ENCODE measurements at regions of chr4 and their contacts with region 1.

Region 1: GRCh38 chr4:26860157-26860921 is at the start of gene STIM2:
- DNase-seq: peak; percentile 91
- ATAC-seq: peak; percentile 71
- H3K4me3 ChIP-seq: peak within 1 kb of the TSS; percentile 84
- H3K27ac ChIP-seq: peak within 1 kb of the TSS; percentile 72
- H3K4me1 ChIP-seq: peaks cover 19% of the 10 kb centered on the region
- H3K27me3 ChIP-seq: no peaks in the 10 kb centered on the region
- CTCF ChIP-seq: peak; percentile 40 to 41 (median 41); a peak in 4 of 6 replicates
- EP300 ChIP-seq: no peak
- POLR2A ChIP-seq: peak; percentile 90
- RAD21 ChIP-seq: peak; percentile 58
- polyA plus RNA-seq, gene STIM2: 4.7 to 10.3 TPM

Region 2: GRCh38 chr4:26583865-26584652 is 276.3 kb before region 1 on chr4 and contains the start of gene TBC1D19:
- CTCF ChIA-PET with region 1: no interaction called
- POLR2A ChIA-PET with region 1: interaction called, 5 read pairs
- RAD21 ChIA-PET with region 1: no interaction called
- SMC1A ChIA-PET with region 1: no interaction called
- in situ Hi-C with region 1: no loop called
- intact Hi-C with region 1: loop called (anchors 2 kb)
- DNase-seq: peak; percentile 56
- ATAC-seq: peak; percentile 100
- H3K4me3 ChIP-seq: peak within 1 kb of the TSS; percentile 74
- H3K27ac ChIP-seq: peak within 1 kb of the TSS; percentile 44
- H3K4me1 ChIP-seq: peaks cover 4% of the 10 kb centered on the region; the same call in 1 of the 2 replicates
- H3K27me3 ChIP-seq: no peaks in the 10 kb centered on the region; a peak in 1 of 4 replicates
- CTCF ChIP-seq: 0 out of 6 replicates have a peak, but pooled peaks of 1 of the 3 experiments have one; percentile 2
- EP300 ChIP-seq: no peak
- POLR2A ChIP-seq: peak; percentile 70
- RAD21 ChIP-seq: peak; percentile 29
- polyA plus RNA-seq, gene TBC1D19: 0.29 to 0.53 TPM

Region 3: DNA sequence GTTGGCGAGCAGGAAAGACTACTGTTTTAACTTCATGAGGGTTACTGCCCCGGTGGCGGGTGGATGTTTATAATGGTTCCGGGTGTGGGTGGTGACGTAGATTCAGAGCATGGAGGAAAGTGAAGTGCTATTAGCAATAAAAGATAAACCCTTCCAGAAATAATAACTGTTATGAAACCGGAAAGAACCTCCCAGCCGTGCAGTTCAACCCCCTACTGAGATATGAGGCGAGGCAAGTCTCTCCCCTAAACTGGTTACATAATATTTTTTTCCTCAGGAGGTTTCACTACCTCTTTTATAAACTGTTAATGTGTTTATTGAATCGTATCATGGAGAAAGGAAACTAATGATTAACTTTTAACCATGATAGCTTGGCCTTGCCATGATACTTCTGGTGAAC is 33.6 kb before region 1 on chr4:
- CTCF ChIA-PET with region 1: interaction called, 3 read pairs
- POLR2A ChIA-PET with region 1: interaction called, 9 read pairs
- RAD21 ChIA-PET with region 1: interaction called, 7 read pairs
- SMC1A ChIA-PET with region 1: interaction called, 14 read pairs
- in situ Hi-C with region 1: no loop called
- intact Hi-C with region 1: loop called (anchors 1 kb)
- DNase-seq: peak; percentile 72
- ATAC-seq: peak; percentile 94
- H3K4me3 ChIP-seq: 0 out of 2 replicates have a peak overlapping the region, but pooled peaks have one; percentile 31
- H3K27ac ChIP-seq: peak overlapping the region; percentile 20; the same call in 1 of the 2 replicates
- H3K4me1 ChIP-seq: peaks cover 21% of the 10 kb centered on the region
- H3K27me3 ChIP-seq: no peaks in the 10 kb centered on the region
- CTCF ChIP-seq: no peak
- EP300 ChIP-seq: peak; percentile 91 to 93
- POLR2A ChIP-seq: no peak
- RAD21 ChIP-seq: no peak

Region 4: DNA sequence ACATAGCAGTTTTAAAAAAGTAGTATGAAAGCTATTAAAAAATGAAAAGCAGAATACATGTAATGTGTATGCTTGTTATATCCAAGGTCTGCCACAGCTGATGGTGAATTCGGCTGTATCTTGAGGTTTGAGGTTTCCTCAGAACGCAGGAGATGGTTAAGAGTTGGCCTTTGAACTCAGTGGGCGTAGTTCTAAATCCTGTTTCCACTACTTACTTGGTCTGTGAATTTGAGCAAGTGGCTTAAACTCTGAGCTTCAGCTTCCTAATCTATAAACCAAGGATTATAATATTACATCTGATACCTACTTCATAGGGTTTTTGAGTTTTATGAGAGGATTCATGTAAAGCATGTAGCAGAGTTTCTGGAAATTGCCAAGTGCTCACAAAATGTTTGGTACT is 125.5 kb after region 1 on chr4:
- CTCF ChIA-PET with region 1: interaction called, 5 read pairs
- POLR2A ChIA-PET with region 1: interaction called, 11 read pairs
- RAD21 ChIA-PET with region 1: interaction called, 53 read pairs
- SMC1A ChIA-PET with region 1: interaction called, 55 read pairs
- in situ Hi-C with region 1: no loop called
- intact Hi-C with region 1: no loop called
- DNase-seq: peak; percentile 44
- ATAC-seq: peak; percentile 96
- H3K4me3 ChIP-seq: no peak overlapping the region
- H3K27ac ChIP-seq: no peak overlapping the region
- H3K4me1 ChIP-seq: peaks cover 14% of the 10 kb centered on the region
- H3K27me3 ChIP-seq: no peaks in the 10 kb centered on the region
- CTCF ChIP-seq: no peak
- EP300 ChIP-seq: 0 out of 4 replicates have a peak, but pooled peaks of 1 of the 2 experiments have one; percentile 21
- POLR2A ChIP-seq: no peak
- RAD21 ChIP-seq: no peak

Region 5: DNA sequence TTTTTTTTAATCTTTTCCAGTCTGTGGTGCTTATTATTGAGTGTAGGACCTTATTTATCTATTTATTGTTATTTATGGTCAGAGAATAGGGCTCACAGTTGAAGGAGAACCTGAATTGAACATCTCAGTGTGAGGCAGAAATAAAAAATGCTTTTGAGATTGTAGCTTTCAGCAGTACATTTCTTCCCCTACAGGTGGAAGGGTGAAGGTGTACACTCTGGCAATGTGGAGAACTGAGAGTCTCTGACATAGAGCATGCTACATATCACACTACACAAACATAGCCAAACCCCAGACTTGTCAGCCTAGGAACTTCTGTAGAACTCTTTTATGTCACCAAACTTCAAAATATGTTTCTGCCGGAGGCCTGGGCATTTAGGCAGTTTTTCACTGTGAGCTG is 140.5 kb after region 1 on chr4:
- CTCF ChIA-PET with region 1: interaction called, 3 read pairs
- POLR2A ChIA-PET with region 1: interaction called, 19 read pairs
- RAD21 ChIA-PET with region 1: interaction called, 21 read pairs
- SMC1A ChIA-PET with region 1: interaction called, 27 read pairs
- in situ Hi-C with region 1: no loop called
- intact Hi-C with region 1: loop called (anchors 2 kb)
- DNase-seq: no peak
- ATAC-seq: peak; percentile 98
- H3K4me3 ChIP-seq: no peak overlapping the region
- H3K27ac ChIP-seq: no peak overlapping the region
- H3K4me1 ChIP-seq: peaks cover 6% of the 10 kb centered on the region; the same call in 1 of the 2 replicates
- H3K27me3 ChIP-seq: no peaks in the 10 kb centered on the region
- CTCF ChIP-seq: peak; percentile 51 to 64 (median 55)
- EP300 ChIP-seq: no peak
- POLR2A ChIP-seq: no peak
- RAD21 ChIP-seq: peak; percentile 82